ENCODE measurements at regions of chr13 and their contacts with region 1.

Region 1: GRCh38 chr13:75694722-75695121 is 58.6 kb downstream of the LMO7 start:
- DNase-seq: peak; percentile 82
- H3K4me3 Mint-ChIP-seq: no peak overlapping the region
- H3K27ac Mint-ChIP-seq: peak overlapping the region; percentile 27
- H3K4me1 Mint-ChIP-seq: peaks cover 18% of the 10 kb centered on the region
- H3K27me3 Mint-ChIP-seq: no peaks in the 10 kb centered on the region
- CTCF ChIP-seq: no peak

Region 2: DNA sequence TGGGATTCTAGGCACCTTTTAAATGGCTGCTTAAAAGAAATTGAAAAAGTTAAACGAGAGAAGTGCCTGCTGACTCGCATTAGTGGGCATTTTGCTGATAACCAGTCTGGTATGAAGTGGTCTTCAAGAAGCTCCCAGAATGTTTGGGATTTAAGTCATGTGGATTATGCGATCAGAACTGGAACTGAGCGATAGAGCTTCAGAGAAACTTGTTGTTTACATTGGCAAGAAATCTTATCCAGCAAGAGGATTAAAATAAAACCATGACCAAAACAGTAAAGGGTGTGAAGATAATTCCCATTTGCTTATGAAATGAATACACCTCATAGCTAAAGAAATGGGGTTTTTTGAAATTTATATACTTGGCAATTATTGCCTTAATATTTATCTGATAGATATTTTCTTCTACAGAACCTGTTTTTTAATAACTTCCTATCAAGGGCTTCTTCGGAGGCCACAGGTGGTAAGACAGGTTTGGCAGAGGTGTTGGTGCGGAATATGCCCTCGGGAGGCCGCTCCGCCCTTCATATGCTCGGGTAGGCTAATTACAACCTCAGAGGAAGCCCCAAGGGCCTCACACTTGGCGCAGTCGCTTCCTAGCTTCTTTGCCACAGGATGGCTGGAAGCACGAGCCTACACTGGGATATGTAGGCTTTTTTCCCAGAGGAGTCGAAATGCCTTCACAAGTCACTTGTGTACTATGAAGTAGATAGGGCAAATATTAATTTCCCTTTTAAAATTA is 10.0 kb after region 1 on chr13:
- CTCF ChIA-PET with region 1: interaction called, 41 read pairs
- POLR2A ChIA-PET with region 1: interaction called, 16 read pairs
- intact Hi-C with region 1: no loop called
- DNase-seq: peak; percentile 69
- H3K4me3 Mint-ChIP-seq: peak overlapping the region; percentile 34
- H3K27ac Mint-ChIP-seq: peak overlapping the region; percentile 98
- H3K4me1 Mint-ChIP-seq: peaks cover 17% of the 10 kb centered on the region
- H3K27me3 Mint-ChIP-seq: no peaks in the 10 kb centered on the region
- CTCF ChIP-seq: peak; percentile 23

Region 3: GRCh38 chr13:75760131-75761021 is 65.7 kb after region 1 on chr13:
- CTCF ChIA-PET with region 1: interaction called, 93 read pairs
- POLR2A ChIA-PET with region 1: interaction called, 48 read pairs
- intact Hi-C with region 1: loop called (anchors 1 kb)
- DNase-seq: peak; percentile 81
- H3K4me3 Mint-ChIP-seq: peak overlapping the region; percentile 80
- H3K27ac Mint-ChIP-seq: peak overlapping the region; percentile 99
- H3K4me1 Mint-ChIP-seq: peaks cover 44% of the 10 kb centered on the region
- H3K27me3 Mint-ChIP-seq: no peaks in the 10 kb centered on the region
- CTCF ChIP-seq: peak; percentile 28

Region 4: GRCh38 chr13:75803164-75803611 is 108.5 kb after region 1 on chr13:
- CTCF ChIA-PET with region 1: interaction called, 75 read pairs
- POLR2A ChIA-PET with region 1: interaction called, 4 read pairs
- intact Hi-C with region 1: loop called (anchors 1 kb)
- DNase-seq: no peak
- H3K4me3 Mint-ChIP-seq: no peak overlapping the region
- H3K27ac Mint-ChIP-seq: no peak overlapping the region
- H3K4me1 Mint-ChIP-seq: no peaks in the 10 kb centered on the region
- H3K27me3 Mint-ChIP-seq: no peaks in the 10 kb centered on the region
- CTCF ChIP-seq: no peak

Region 5: DNA sequence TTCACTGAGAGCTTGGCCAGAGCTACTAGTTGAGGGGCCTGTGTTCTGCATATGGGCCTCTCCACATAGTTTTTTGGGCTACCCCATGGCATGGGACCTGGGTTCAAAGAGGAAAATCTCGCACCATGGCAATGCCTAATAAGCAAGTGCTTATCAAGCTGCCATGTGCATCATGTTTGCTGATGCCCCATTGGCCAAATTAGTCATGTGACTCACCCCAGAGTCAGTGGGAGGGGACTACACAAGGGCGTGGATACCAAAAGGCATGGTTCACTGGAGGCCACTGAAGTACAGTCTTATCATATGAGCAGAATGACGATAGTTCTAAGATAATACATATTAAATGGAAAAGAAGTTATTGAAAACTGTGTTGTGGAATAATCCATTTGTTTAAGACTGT is 156.2 kb after region 1 on chr13:
- CTCF ChIA-PET with region 1: interaction called, 20 read pairs
- POLR2A ChIA-PET with region 1: interaction called, 5 read pairs
- intact Hi-C with region 1: no loop called
- DNase-seq: no peak
- H3K4me3 Mint-ChIP-seq: no peak overlapping the region
- H3K27ac Mint-ChIP-seq: no peak overlapping the region
- H3K4me1 Mint-ChIP-seq: no peaks in the 10 kb centered on the region
- H3K27me3 Mint-ChIP-seq: no peaks in the 10 kb centered on the region
- CTCF ChIP-seq: no peak

Region 6: GRCh38 chr13:75946536-75947284 is 252.0 kb after region 1 on chr13:
- CTCF ChIA-PET with region 1: no interaction called
- POLR2A ChIA-PET with region 1: no interaction called
- intact Hi-C with region 1: no loop called
- DNase-seq: no peak
- H3K4me3 Mint-ChIP-seq: no peak overlapping the region
- H3K27ac Mint-ChIP-seq: no peak overlapping the region
- H3K4me1 Mint-ChIP-seq: no peaks in the 10 kb centered on the region
- H3K27me3 Mint-ChIP-seq: no peaks in the 10 kb centered on the region
- CTCF ChIP-seq: no peak

Region 7: GRCh38 chr13:76016799-76017400 is 322.2 kb after region 1 on chr13:
- CTCF ChIA-PET with region 1: interaction called, 3 read pairs
- POLR2A ChIA-PET with region 1: no interaction called
- intact Hi-C with region 1: loop called (anchors 5 kb)
- DNase-seq: peak; percentile 62
- H3K4me3 Mint-ChIP-seq: no peak overlapping the region
- H3K27ac Mint-ChIP-seq: no peak overlapping the region
- H3K4me1 Mint-ChIP-seq: no peaks in the 10 kb centered on the region
- H3K27me3 Mint-ChIP-seq: no peaks in the 10 kb centered on the region
- CTCF ChIP-seq: peak; percentile 53